Activated CD8-positive, alpha-beta T cell treated with anti-CD3 and anti-CD28 coated beads, Interleukin-2, amount 10 ng/mL, durations not matched to agents 7 days and 5 days (primary cell): ENCODE measurements at regions of chr13 and their contacts with region 1.

Region 1: GRCh38 chr13:99442273-99442895 is 58.9 kb upstream of the TM9SF2 start:
- DNase-seq: peak; percentile 71
- ATAC-seq: peak; percentile 74
- H3K4me3 Mint-ChIP-seq: no peak overlapping the region
- H3K27ac Mint-ChIP-seq: no peak overlapping the region
- H3K4me1 Mint-ChIP-seq: peaks cover 11% of the 10 kb centered on the region
- H3K27me3 Mint-ChIP-seq: peaks cover 22% of the 10 kb centered on the region

Region 2: DNA sequence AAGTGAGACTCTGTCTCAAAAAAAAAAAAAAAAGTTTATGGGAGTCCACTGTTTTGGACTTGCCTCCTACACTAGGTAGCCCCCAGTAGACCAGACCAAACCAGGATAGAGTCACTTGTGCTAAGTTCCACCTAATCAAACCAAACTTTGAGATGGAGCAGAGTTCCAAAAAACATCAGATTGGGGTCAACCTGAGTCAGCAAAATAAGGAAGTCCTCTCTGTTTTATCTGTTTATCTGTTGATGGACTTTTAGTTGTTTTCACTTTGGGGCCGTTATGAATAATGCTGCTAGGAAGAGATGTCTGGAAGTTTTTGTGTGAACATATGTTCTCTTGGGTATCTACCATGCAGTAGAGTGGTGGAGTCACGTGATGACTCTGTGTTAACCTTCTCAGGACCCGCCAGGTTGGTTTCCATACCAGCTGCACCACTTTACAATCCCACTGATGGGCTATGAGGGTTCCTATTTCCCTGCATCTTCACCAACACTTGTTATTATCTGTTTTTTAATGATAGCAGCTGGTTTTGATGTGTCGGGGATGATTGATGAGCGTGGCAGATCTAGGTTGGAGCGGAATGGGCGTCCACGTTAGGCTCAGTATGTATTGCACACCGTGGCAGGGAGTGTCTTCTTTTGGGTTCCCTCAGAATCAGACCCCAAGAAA is 12.3 kb after region 1 on chr13:
- CTCF ChIA-PET with region 1: interaction called, 25 read pairs
- POLR2A ChIA-PET with region 1: interaction called, 3 read pairs
- DNase-seq: no peak
- ATAC-seq: no peak
- H3K4me3 Mint-ChIP-seq: no peak overlapping the region
- H3K27ac Mint-ChIP-seq: no peak overlapping the region
- H3K4me1 Mint-ChIP-seq: peaks cover 4% of the 10 kb centered on the region
- H3K27me3 Mint-ChIP-seq: peaks cover 10% of the 10 kb centered on the region

Region 3: DNA sequence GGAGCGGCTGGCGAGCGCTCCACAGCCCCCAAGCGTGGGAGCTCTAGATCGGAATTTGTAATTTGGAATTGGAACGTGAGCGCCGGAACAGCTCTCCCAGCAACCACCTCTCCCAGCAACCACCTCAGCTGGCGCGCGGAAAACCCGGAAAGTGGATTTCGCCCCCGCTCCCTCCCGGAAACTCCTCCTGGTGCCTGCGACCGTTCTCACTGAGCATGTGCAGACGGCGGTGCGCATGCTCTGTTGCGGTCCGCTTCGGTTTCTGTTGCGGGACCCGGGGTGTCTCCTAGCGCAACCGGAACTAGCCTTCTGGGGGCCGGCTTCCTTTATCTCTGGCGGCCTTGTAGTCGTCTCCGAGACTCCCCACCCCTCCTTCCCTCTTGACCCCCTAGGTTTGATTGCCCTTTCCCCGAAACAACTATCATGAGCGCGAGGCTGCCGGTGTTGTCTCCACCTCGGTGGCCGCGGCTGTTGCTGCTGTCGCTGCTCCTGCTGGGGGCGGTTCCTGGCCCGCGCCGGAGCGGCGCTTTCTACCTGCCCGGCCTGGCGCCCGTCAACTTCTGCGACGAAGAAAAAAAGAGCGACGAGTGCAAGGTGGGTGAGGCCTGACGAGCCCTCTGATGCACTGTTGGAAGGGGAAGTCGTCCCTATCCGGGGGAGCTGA is 58.9 kb after region 1 on chr13 and contains the start of gene TM9SF2:
- CTCF ChIA-PET with region 1: interaction called, 74 read pairs
- POLR2A ChIA-PET with region 1: interaction called, 4 read pairs
- DNase-seq: peak; percentile 98
- ATAC-seq: peak; percentile 70
- H3K4me3 Mint-ChIP-seq: peak within 1 kb of the TSS; percentile 88
- H3K27ac Mint-ChIP-seq: peak within 1 kb of the TSS; percentile 97
- H3K4me1 Mint-ChIP-seq: peaks cover 76% of the 10 kb centered on the region
- H3K27me3 Mint-ChIP-seq: no peaks in the 10 kb centered on the region
- total RNA-seq, gene TM9SF2: 64.4 to 64.5 TPM

Region 4: DNA sequence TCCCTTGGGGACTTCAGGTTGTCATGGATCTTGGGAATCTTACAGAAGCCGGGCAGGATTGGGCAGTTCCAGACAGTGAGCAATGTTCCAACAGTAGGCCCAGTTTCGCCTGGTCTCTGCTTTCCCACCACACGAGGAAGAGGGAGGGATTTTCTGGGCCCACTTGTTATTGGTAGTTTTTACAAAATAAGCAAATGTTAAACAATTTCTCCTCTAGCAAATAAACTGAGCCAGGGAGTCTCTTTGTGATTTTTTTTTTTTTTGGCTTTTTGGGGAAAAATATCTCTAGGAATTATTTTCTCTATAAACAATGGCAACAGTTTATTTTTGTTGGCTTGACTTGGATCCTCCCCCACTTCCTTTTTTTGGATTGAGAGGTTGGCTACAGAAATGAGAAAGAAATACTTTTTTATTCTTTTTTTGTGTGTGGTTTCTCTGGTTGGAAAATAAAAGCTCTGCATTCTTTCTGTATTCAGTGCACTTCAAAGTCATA is 148.2 kb after region 1 on chr13:
- CTCF ChIA-PET with region 1: no interaction called
- POLR2A ChIA-PET with region 1: no interaction called
- DNase-seq: no peak
- ATAC-seq: no peak
- H3K4me3 Mint-ChIP-seq: no peak overlapping the region
- H3K27ac Mint-ChIP-seq: no peak overlapping the region
- H3K4me1 Mint-ChIP-seq: peaks cover 3% of the 10 kb centered on the region
- H3K27me3 Mint-ChIP-seq: peaks cover 4% of the 10 kb centered on the region